PC-3 (cell line): ENCODE measurements at regions of chr5 and their contacts with region 1.

Region 1: GRCh38 chr5:178551059-178551458 is 39.1 kb downstream of the COL23A1 start:
- DNase-seq: peak; percentile 60
- ATAC-seq: no peak
- H3K4me3 ChIP-seq: no peak overlapping the region
- H3K27ac ChIP-seq: no peak overlapping the region
- H3K4me1 ChIP-seq: no peaks in the 10 kb centered on the region
- H3K27me3 ChIP-seq: peaks cover 29% of the 10 kb centered on the region
- CTCF ChIP-seq: peak; percentile 53

Region 2: GRCh38 chr5:178312880-178313282 is 238.2 kb before region 1 on chr5:
- CTCF ChIA-PET with region 1: no interaction called
- POLR2A ChIA-PET with region 1: no interaction called
- intact Hi-C with region 1: no loop called
- DNase-seq: no peak
- ATAC-seq: no peak
- H3K4me3 ChIP-seq: no peak overlapping the region
- H3K27ac ChIP-seq: no peak overlapping the region
- H3K4me1 ChIP-seq: no peaks in the 10 kb centered on the region
- H3K27me3 ChIP-seq: peaks cover 11% of the 10 kb centered on the region
- CTCF ChIP-seq: no peak

Region 3: GRCh38 chr5:178461004-178461730 is 89.9 kb before region 1 on chr5:
- CTCF ChIA-PET with region 1: no interaction called
- POLR2A ChIA-PET with region 1: no interaction called
- intact Hi-C with region 1: loop called (anchors 1 kb)
- DNase-seq: peak; percentile 66
- ATAC-seq: peak; percentile 97
- H3K4me3 ChIP-seq: no peak overlapping the region
- H3K27ac ChIP-seq: no peak overlapping the region
- H3K4me1 ChIP-seq: no peaks in the 10 kb centered on the region
- H3K27me3 ChIP-seq: peaks cover 8% of the 10 kb centered on the region; the same call in 1 of the 2 replicates
- CTCF ChIP-seq: peak; percentile 78